ENCODE measurements at regions of chr3 and their contacts with region 1.

Region 1: DNA sequence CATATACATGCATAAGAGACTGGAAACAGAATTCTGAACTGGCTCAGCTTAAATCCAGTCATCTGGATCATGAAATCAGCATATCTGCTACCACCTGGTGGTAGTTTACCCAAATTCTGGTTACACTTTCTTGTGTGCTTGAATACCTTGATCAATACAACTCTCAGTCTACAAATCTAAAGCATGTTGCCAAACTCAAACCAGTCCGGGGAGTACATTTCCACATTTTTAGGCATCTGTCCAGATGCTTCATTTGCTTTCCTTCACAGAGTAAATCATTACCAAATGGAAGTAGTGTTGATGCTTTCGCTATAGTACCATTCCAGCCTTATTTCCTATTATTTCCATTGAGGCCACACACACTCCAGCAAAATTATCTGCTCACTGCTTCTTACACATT is 126.4 kb downstream of the P2RY1 start:
- DNase-seq: peak; percentile 80
- H3K4me3 Mint-ChIP-seq: peak overlapping the region; percentile 4
- H3K27ac Mint-ChIP-seq: peak overlapping the region; percentile 23
- H3K4me1 Mint-ChIP-seq: peaks cover 65% of the 10 kb centered on the region
- H3K27me3 Mint-ChIP-seq: no peaks in the 10 kb centered on the region
- CTCF ChIP-seq: peak; percentile 78

Region 2: DNA sequence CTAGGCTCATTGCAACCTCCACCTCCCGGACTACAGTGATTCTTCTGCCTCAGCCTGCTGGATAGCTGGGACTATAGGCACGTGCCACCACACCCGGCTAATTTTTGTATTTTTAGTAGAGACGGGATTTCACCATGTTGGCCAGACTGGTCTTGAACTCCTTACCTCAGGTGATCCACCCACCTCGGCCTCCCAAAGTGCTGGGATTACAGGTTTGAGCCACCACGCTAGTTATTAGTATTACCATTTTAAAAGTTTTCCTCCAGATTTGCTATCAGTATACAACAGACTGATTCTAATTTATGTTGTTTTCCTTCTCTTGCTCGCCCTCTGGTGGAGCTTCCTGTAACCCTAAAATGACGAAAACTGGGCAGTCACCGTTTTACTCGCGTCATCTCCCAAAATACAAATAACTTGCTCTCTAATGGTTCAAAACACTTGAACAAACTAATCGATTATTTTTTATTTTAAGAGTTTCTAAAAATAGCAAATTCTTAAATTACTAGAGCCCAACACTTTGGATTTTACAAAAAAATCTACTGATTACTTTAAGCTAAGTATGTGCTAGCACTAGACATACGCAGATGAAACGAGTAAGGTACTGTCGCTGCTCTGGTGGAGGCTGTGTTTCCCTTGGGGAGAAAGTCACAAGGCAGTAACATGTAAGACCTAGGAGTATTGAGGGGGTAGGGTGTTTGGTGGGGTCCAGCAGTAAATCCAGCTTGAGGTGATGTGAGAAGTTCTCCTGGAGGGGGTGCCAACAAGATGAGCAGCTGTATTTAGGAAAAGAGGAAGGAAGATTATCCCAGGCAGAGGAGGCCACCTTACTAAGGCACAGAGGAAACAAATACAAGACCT is 489.3 kb before region 1 on chr3:
- CTCF ChIA-PET with region 1: interaction called, 7 read pairs
- intact Hi-C with region 1: loop called (anchors 2 kb)
- DNase-seq: peak; percentile 76
- H3K4me3 Mint-ChIP-seq: peak overlapping the region; percentile 53
- H3K27ac Mint-ChIP-seq: peak overlapping the region; percentile 77
- H3K4me1 Mint-ChIP-seq: peaks cover 1% of the 10 kb centered on the region
- H3K27me3 Mint-ChIP-seq: no peaks in the 10 kb centered on the region
- CTCF ChIP-seq: peak; percentile 87

Region 3: DNA sequence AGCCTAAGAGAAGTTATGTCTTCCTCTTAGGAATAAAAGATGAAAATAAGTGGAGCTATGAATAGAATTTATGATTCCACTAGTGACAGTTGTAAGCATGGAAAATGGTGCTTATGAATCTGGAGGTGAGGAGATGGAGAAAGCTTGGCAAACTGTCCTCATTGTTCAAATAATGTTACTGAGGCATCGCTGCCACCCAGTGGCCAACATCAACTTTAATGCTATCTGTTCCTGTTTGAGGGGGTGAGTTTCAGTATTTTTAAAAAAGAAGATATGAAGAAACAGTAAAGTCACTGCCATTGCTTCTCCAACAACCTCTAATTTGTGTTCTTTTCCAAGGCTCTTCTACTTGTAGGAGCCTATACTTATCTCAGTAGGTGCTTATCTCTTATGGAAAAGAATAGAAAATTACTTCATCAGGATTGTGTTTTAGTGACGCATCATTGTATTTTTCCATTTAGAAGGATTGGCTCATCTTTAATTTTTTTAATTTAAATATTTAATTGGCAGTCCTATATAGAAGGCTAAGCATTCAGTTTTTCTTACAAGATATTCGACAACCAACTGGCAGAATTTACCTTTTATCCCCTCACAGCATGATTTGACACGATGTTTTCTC is 386.8 kb before region 1 on chr3:
- CTCF ChIA-PET with region 1: no interaction called
- intact Hi-C with region 1: loop called (anchors 1 kb)
- DNase-seq: peak; percentile 60
- H3K4me3 Mint-ChIP-seq: no peak overlapping the region
- H3K27ac Mint-ChIP-seq: no peak overlapping the region
- H3K4me1 Mint-ChIP-seq: no peaks in the 10 kb centered on the region
- H3K27me3 Mint-ChIP-seq: no peaks in the 10 kb centered on the region
- CTCF ChIP-seq: peak; percentile 47

Region 4: GRCh38 chr3:152589644-152590043 is 371.7 kb before region 1 on chr3:
- CTCF ChIA-PET with region 1: no interaction called
- intact Hi-C with region 1: no loop called
- DNase-seq: no peak
- H3K4me3 Mint-ChIP-seq: no peak overlapping the region
- H3K27ac Mint-ChIP-seq: no peak overlapping the region
- H3K4me1 Mint-ChIP-seq: peaks cover 23% of the 10 kb centered on the region
- H3K27me3 Mint-ChIP-seq: no peaks in the 10 kb centered on the region
- CTCF ChIP-seq: no peak

Region 5: DNA sequence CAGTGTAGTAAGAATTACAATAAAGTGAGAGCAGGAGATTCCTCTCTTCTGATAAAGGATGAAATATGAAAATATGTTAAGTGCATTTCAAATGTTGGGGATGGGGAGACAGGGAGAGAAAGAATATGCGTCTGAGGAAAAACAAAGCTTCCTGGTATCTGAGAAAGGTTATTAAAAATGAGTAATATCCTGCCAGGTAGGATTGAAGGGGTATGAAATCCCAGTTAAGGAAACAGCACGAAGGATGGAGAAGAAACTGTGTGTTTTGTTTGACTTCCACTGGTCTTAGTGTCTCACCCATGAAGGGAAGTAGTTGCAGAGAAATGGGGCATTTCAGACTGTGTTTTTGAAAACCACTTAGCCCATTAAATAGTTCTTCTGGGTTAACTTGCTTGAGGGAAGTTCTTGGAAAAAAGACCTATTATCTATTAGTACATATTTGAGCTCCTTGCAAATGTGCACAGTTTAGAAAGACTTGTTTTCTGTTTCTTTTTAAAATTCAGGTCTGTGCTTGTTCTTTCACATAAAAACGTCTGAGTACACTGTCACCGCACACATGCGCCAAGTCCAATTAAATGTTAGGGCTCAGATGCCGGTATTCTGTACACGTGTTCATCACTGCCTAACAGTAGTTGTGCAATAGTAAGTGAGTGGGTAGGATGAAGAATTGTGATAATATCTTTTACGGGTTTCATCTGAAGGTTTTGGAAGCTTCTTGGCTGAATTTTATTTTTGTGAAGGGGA is 322.4 kb before region 1 on chr3:
- CTCF ChIA-PET with region 1: no interaction called
- intact Hi-C with region 1: loop called (anchors 5 kb)
- DNase-seq: no peak
- H3K4me3 Mint-ChIP-seq: no peak overlapping the region
- H3K27ac Mint-ChIP-seq: peak overlapping the region; percentile 2
- H3K4me1 Mint-ChIP-seq: peaks cover 35% of the 10 kb centered on the region
- H3K27me3 Mint-ChIP-seq: no peaks in the 10 kb centered on the region
- CTCF ChIP-seq: no peak

Region 6: DNA sequence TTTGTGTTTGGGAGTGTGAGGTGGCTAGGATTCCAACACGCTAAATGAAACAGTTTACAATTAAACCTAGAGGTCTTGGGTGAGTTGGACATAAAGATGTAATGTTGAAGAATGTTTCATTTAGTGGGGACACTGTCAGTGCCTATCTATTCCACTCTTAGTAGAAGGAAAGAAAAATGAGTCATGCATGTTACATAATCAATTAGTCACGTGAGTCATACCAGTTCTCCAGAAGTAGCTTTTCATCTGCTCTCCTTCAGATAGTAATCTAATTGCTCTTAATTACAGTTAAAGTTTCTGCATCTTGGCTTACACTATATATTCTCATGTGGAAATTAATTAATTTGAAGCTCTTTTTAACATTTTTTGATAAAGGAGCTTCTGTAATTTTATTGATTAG is 242.1 kb before region 1 on chr3:
- CTCF ChIA-PET with region 1: no interaction called
- intact Hi-C with region 1: loop called (anchors 2 kb)
- DNase-seq: no peak
- H3K4me3 Mint-ChIP-seq: no peak overlapping the region
- H3K27ac Mint-ChIP-seq: peak overlapping the region; percentile 65
- H3K4me1 Mint-ChIP-seq: peaks cover 8% of the 10 kb centered on the region
- H3K27me3 Mint-ChIP-seq: no peaks in the 10 kb centered on the region
- CTCF ChIP-seq: no peak

Region 7: GRCh38 chr3:152945556-152945955 is 15.8 kb before region 1 on chr3:
- CTCF ChIA-PET with region 1: interaction called, 10 read pairs
- intact Hi-C with region 1: no loop called
- DNase-seq: no peak
- H3K4me3 Mint-ChIP-seq: no peak overlapping the region
- H3K27ac Mint-ChIP-seq: no peak overlapping the region
- H3K4me1 Mint-ChIP-seq: peaks cover 28% of the 10 kb centered on the region
- H3K27me3 Mint-ChIP-seq: no peaks in the 10 kb centered on the region
- CTCF ChIP-seq: no peak

Region 8: DNA sequence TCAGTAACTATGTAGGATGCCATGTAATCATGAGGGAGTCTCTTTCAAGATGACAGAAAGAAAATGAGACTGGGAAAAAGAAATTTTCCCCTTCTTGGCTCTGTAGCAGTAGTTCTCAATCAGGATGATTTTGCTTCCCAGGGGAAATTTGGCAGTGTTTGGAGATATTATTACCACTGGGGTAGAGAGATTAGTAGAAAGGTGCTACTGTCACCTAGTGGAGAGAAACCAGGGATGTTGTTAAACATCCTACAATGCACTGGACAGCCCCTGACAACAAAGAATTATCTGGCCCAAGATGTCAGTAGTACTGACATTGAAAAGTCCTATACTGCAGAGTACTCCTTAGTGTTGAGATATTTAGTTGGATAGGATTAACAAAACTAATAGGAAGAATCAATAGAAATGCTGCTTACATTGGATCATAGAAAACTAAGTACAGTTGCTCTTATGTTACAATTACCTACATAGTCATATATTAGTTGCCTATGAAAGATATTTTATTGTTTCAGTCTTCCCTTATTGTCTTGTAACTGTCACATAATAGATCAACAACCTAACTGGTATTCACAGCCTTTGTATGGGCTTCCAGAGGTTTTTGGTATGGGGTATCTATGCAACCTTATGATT is 634.0 kb after region 1 on chr3:
- CTCF ChIA-PET with region 1: no interaction called
- intact Hi-C with region 1: loop called (anchors 5 kb)
- DNase-seq: peak; percentile 32
- H3K4me3 Mint-ChIP-seq: no peak overlapping the region
- H3K27ac Mint-ChIP-seq: no peak overlapping the region
- H3K4me1 Mint-ChIP-seq: peaks cover 44% of the 10 kb centered on the region
- H3K27me3 Mint-ChIP-seq: no peaks in the 10 kb centered on the region
- CTCF ChIP-seq: peak; percentile 87